Head of caudate nucleus (tissue), 42 donors: ENCODE measurements at regions of chr11 and their contacts with region 1.

Region 1: DNA sequence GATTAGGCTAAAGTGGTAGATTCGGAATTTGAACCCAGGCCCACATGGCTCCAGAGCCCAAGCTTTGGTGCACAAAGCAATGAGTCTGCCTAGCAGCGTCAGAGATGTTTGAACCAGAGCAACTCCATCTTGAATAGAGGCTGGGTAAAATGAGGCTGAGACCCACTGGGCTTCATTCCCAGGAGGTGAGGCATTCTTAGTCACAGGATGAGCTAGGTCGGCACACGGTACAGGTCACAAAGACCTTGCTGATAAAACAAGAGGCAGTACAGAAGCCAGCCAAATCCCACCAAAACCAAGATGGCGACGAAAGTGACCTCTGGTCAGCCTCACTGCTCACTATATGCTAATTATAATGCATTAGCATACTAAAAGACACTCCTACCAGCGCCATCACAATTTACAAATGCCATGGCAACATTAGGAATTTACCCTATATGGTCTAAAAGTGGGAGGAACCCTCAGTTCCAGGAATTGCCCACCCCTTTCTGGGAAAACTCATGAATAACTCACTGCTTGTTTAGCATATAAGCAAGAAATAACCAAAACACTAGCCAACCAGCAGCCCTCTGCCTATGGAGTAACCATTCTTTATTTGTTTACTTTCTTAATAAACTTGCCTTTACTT is 40.3 kb upstream of the DAGLA start:
- DNase-seq: no peak

Region 2: GRCh38 chr11:61532139-61533038 is 107.5 kb before region 1 on chr11:
- intact Hi-C with region 1: loop called (anchors 10 kb)
- DNase-seq: peak in 16 of 42 donors; percentile 31 to 72 (median 52)